GM10248 (cell line): ENCODE measurements at regions of chr9 and their contacts with region 1.

Region 1: GRCh38 chr9:33374634-33375213 is 27.6 kb downstream of the AQP7 start:
- DNase-seq: peak; percentile 73
- CTCF ChIP-seq: peak; percentile 73

Region 2: GRCh38 chr9:33354651-33355211 is 20.0 kb before region 1 on chr9:
- CTCF ChIA-PET with region 1: interaction called, 29 read pairs
- POLR2A ChIA-PET with region 1: no interaction called
- DNase-seq: no peak
- CTCF ChIP-seq: no peak

Region 3: GRCh38 chr9:33404788-33405362 is 30.2 kb after region 1 on chr9:
- CTCF ChIA-PET with region 1: interaction called, 14 read pairs
- POLR2A ChIA-PET with region 1: no interaction called
- DNase-seq: no peak
- CTCF ChIP-seq: no peak

Region 4: DNA sequence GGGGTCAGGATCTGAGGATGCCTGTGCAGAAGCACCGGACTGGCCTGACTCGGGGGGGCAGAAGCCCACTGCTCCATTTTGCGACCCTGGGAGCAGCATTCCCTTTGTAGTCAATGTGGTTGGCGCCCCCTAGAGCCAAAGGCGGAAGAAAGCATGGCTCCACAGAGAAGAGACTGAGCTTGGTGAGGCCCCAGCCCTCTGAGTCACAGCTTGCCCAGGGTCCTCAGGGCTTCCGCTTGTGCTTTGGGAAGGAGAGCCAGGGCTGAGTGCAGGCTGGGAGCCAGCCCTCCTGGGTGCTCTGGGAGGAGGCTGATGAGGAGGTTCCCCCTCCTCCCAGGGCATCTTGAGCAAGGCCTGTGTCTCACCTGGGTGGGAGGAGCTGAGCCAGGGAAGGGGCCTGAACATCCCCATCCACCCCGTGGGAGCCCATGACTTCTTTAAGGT is 78.1 kb after region 1 on chr9:
- CTCF ChIA-PET with region 1: interaction called, 28 read pairs
- POLR2A ChIA-PET with region 1: no interaction called
- DNase-seq: peak; percentile 68
- CTCF ChIP-seq: peak; percentile 62

Region 5: DNA sequence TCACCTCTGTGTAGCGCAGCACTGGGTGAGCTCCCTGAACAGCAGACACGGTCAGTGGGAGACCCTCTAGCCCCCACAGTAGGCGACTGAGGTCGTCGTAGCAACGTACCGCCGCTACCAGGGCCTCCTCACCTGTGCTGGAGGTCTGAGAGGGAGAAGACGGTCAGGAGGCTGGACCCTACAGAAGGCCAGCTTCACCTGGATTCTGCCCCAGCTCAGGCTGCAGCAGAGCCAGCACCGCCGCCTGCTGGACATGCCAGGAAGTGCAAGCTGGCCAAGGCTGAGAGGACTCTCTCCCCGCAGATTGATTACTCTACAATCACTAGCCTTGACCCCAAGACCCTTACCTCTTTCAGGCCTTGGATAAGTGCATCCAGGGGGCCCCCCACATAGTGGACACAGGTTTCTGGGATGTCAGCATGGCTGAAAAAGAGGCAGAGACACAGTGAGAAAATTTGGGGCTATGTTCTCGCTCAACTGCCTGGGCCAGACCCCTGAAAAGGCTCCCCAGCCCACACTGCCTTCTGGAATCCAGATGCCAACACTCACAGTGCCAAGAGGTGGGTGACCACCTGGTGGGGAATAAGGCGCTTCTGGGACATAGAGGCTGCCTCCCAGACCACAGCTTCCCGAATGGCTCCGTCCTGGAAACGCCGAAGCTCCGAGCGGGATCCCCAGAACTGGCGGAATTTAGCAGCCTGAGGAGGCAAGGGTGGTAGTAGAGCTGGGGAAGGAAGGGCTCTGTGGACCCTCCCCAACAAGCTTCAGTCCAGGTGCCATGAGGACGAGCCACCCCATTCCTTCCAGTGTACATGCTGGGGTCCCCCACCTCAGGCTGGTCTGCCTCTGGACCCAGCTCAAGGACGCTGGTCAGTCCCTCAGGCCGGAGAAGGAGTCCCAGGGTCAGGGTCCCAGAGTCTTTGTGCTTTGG is 92.1 kb after region 1 on chr9:
- CTCF ChIA-PET with region 1: interaction called, 37 read pairs
- POLR2A ChIA-PET with region 1: no interaction called
- DNase-seq: peak; percentile 83
- CTCF ChIP-seq: peak; percentile 94

Region 6: GRCh38 chr9:33633636-33634035 is 258.9 kb after region 1 on chr9:
- CTCF ChIA-PET with region 1: no interaction called
- POLR2A ChIA-PET with region 1: no interaction called
- DNase-seq: no peak
- CTCF ChIP-seq: no peak